CD4-positive, alpha-beta T cell (primary cell): ENCODE measurements at regions of chr12 and their contacts with region 1.

Region 1: GRCh38 chr12:104569346-104570173 is 112.8 kb downstream of the CHST11 start:
- DNase-seq: peak in 10 of 14 experiments; percentile 11 to 82 (median 28)
- ATAC-seq: peak; percentile 75
- H3K4me3 ChIP-seq: peak overlapping the region; percentile 6
- H3K4me3 Mint-ChIP-seq: peak overlapping the region; percentile 2
- H3K27ac ChIP-seq: peak overlapping the region; percentile 13 to 59
- H3K27ac Mint-ChIP-seq: peak overlapping the region; percentile 71
- H3K4me1 ChIP-seq: peaks cover 33% of the 10 kb centered on the region
- H3K4me1 Mint-ChIP-seq: peaks cover 61% of the 10 kb centered on the region
- H3K27me3 ChIP-seq: no peaks in the 10 kb centered on the region
- H3K27me3 Mint-ChIP-seq: no peaks in the 10 kb centered on the region
- CTCF ChIP-seq: no peak

Region 2: GRCh38 chr12:104604070-104604994 is 34.8 kb after region 1 on chr12:
- CTCF ChIA-PET with region 1: no interaction called
- POLR2A ChIA-PET with region 1: no interaction called
- intact Hi-C with region 1: loop called in 1 of 2 experiments (anchors 2 kb)
- DNase-seq: peak in 11 of 14 experiments; percentile 5 to 77 (median 20)
- ATAC-seq: peak; percentile 85
- H3K4me3 ChIP-seq: peak overlapping the region; percentile 3
- H3K4me3 Mint-ChIP-seq: peak overlapping the region; percentile 11
- H3K27ac ChIP-seq: peak overlapping the region; percentile 6 to 48
- H3K27ac Mint-ChIP-seq: peak overlapping the region; percentile 81
- H3K4me1 ChIP-seq: peaks cover 39% of the 10 kb centered on the region
- H3K4me1 Mint-ChIP-seq: peaks cover 58% of the 10 kb centered on the region
- H3K27me3 ChIP-seq: no peaks in the 10 kb centered on the region
- H3K27me3 Mint-ChIP-seq: no peaks in the 10 kb centered on the region
- CTCF ChIP-seq: no peak